OCI-LY7 (cell line): ENCODE measurements at regions of chr2 and their contacts with region 1.

Region 1: GRCh38 chr2:222912117-222912516 is 51.3 kb downstream of the ACSL3 start:
- DNase-seq: peak; percentile 97
- H3K4me3 ChIP-seq: peak overlapping the region; percentile 59
- H3K27ac ChIP-seq: peak overlapping the region; percentile 98
- H3K4me1 ChIP-seq: peaks cover 69% of the 10 kb centered on the region
- CTCF ChIP-seq: no peak

Region 2: DNA sequence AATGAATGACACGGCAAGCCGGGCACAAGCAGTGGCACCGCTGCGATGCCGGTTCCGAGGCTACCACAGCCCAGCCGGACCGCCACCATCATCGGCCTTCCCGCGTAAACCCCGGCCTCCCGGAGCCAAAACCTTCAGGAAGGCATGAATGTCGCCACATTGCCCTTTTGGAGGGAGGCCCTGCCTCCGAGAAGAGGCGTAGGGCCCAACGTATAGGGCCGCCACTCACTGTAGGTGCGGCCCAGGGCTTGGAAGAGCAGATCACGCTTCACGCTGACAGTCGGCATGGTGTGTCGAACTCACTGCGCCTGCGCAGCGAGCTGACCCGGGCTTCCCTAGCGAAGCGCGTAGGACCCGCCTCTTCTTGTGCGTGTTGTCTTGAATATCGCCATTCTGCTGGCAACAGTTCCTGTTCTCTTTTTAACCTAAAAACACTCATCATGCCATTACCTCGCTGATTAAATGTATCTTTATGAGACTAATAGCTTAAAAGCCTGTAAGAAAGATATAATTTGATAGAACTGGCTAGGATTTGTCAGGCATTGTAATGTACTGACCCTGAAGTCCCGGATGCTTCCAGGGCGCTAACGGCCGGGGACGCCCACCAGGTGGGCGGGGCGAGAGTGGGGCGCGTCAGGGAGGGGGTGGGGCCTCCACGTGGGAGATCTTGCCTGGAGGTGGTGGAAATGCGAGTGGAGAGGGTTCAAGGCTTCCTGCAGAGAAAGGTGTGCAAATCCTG is 256.2 kb before region 1 on chr2 and contains the start of gene FARSB:
- CTCF ChIA-PET with region 1: interaction called, 3 read pairs
- POLR2A ChIA-PET with region 1: interaction called, 4 read pairs
- intact Hi-C with region 1: loop called (anchors 1 kb)
- DNase-seq: peak; percentile 99
- H3K4me3 ChIP-seq: peak within 1 kb of the TSS; percentile 89
- H3K27ac ChIP-seq: peak within 1 kb of the TSS; percentile 83
- H3K4me1 ChIP-seq: peaks cover 36% of the 10 kb centered on the region
- CTCF ChIP-seq: no peak
- total RNA-seq, gene FARSB: 23.4 and 24.9 TPM in 2 replicates

Region 3: GRCh38 chr2:222707689-222708525 is 204.2 kb before region 1 on chr2:
- CTCF ChIA-PET with region 1: interaction called, 3 read pairs
- POLR2A ChIA-PET with region 1: interaction called, 11 read pairs
- intact Hi-C with region 1: loop called (anchors 2 kb)
- DNase-seq: peak; percentile 76
- H3K4me3 ChIP-seq: no peak overlapping the region
- H3K27ac ChIP-seq: no peak overlapping the region
- H3K4me1 ChIP-seq: peaks cover 17% of the 10 kb centered on the region
- CTCF ChIP-seq: peak; percentile 96

Region 4: GRCh38 chr2:222797261-222797660 is 114.9 kb before region 1 on chr2:
- CTCF ChIA-PET with region 1: no interaction called
- POLR2A ChIA-PET with region 1: interaction called, 19 read pairs
- intact Hi-C with region 1: loop called (anchors 1 kb)
- DNase-seq: peak; percentile 39
- H3K4me3 ChIP-seq: no peak overlapping the region
- H3K27ac ChIP-seq: no peak overlapping the region
- H3K4me1 ChIP-seq: peaks cover 51% of the 10 kb centered on the region
- CTCF ChIP-seq: peak; percentile 80

Region 5: DNA sequence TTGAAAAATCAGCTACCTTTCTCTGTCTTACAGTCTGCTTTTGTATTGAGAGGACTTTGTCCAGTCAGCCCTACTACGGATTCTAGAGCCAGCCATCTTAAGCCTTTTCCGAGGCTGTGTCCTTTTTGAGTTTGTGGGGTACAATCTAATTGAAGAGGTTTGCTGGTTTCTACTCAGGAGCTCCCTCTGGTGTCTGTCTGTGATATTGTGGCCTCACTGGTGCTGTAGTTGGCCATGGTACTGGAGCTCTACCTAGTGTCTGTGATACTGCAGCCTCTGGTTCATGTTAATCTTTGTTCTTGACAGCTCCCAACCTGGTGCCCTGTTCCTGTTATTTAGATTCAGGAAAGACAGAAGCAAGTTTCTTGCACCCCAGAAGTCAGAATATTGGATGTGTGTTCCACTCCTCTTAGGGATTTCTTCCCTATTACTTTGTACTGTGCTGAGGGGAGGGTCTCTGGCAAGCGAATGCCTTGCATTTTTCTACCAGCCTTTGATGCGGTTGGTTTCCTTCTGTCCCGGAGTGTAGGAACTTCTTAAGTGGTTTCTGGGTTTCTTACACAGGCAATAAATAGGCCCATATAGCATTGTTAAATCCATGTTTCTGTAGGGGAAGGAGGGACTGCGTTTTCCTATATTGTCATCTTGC is 27.2 kb after region 1 on chr2:
- CTCF ChIA-PET with region 1: interaction called, 5 read pairs
- POLR2A ChIA-PET with region 1: interaction called, 6 read pairs
- intact Hi-C with region 1: loop called (anchors 1 kb)
- DNase-seq: peak; percentile 73
- H3K4me3 ChIP-seq: no peak overlapping the region
- H3K27ac ChIP-seq: no peak overlapping the region
- H3K4me1 ChIP-seq: no peaks in the 10 kb centered on the region
- CTCF ChIP-seq: peak; percentile 96